HEK293 (cell line): ENCODE measurements at regions of chr5 and their contacts with region 1.

Region 1: DNA sequence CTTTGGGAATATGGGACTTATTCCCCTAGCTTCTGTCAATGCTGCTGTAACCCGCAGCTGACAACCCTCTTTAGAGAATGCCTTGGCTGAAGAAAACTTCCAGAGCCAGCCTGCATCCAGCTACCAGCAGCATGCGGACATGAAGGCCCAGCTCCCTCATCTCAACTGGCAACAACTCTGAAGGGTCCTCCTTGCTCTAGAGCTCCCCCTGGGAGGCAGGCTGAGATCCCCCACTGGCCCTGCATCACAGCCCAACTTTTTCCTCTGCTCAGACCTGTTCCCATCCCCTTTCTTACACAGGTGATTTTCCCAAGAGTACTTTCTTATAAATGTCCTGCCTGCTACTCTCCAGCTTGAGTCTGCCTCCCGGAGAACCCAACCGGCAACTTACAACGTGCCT is 18.7 kb upstream of the WNT8A start:
- H3K4me3 ChIP-seq: no peak overlapping the region
- H3K27ac ChIP-seq: no peak overlapping the region
- H3K4me1 ChIP-seq: no peaks in the 10 kb centered on the region
- CTCF ChIP-seq: 0 out of 2 replicates have a peak, but pooled peaks have one; percentile 32

Region 2: GRCh38 chr5:137122075-137122474 is 943.0 kb before region 1 on chr5:
- CTCF ChIA-PET with region 1: no interaction called
- POLR2A ChIA-PET with region 1: no interaction called
- H3K4me3 ChIP-seq: no peak overlapping the region
- H3K27ac ChIP-seq: no peak overlapping the region
- H3K4me1 ChIP-seq: no peaks in the 10 kb centered on the region
- CTCF ChIP-seq: no peak

Region 3: GRCh38 chr5:138035605-138036537 is 29.2 kb before region 1 on chr5:
- CTCF ChIA-PET with region 1: interaction called, 78 read pairs
- POLR2A ChIA-PET with region 1: no interaction called
- H3K4me3 ChIP-seq: no peak overlapping the region
- H3K27ac ChIP-seq: no peak overlapping the region
- H3K4me1 ChIP-seq: no peaks in the 10 kb centered on the region
- CTCF ChIP-seq: peak; percentile 90

Region 4: GRCh38 chr5:138054847-138055558 is 10.1 kb before region 1 on chr5:
- CTCF ChIA-PET with region 1: interaction called, 15 read pairs
- POLR2A ChIA-PET with region 1: interaction called, 5 read pairs
- H3K4me3 ChIP-seq: no peak overlapping the region
- H3K27ac ChIP-seq: no peak overlapping the region
- H3K4me1 ChIP-seq: no peaks in the 10 kb centered on the region
- CTCF ChIP-seq: no peak

Region 5: DNA sequence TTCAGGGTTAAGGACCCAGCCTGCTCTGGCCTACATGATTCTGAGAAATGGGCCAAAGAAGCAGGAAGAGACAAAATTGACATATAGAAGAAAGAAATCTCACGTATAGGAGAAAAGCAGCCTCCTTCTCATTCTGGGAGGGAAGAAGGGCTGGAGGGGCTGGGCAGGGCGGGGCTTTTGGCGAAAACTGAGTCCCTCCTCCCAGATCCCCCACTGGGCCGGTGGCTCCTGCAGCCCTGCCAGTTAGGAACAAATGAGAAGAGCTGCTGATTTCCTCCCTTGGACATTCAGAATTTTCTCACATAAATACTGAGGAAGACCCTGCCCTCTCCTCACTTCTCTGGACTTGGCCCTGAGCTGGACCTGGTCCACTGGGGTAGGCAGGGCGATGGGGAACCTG is 18.6 kb after region 1 on chr5 and contains the start of gene WNT8A:
- CTCF ChIA-PET with region 1: interaction called, 11 read pairs
- POLR2A ChIA-PET with region 1: no interaction called
- H3K4me3 ChIP-seq: no peak within 1 kb of the TSS
- H3K27ac ChIP-seq: no peak within 1 kb of the TSS
- H3K4me1 ChIP-seq: no peaks in the 10 kb centered on the region
- CTCF ChIP-seq: no peak